ENCODE measurements at regions of chr1 and their contacts with region 1.

Region 1: GRCh38 chr1:230917284-230918135 is 49.2 kb upstream of the C1orf198 start:
- DNase-seq: peak; percentile 93
- H3K4me3 Mint-ChIP-seq: no peak overlapping the region
- H3K27ac Mint-ChIP-seq: no peak overlapping the region
- H3K4me1 Mint-ChIP-seq: peaks cover 6% of the 10 kb centered on the region
- H3K27me3 Mint-ChIP-seq: no peaks in the 10 kb centered on the region
- CTCF ChIP-seq: peak; percentile 96

Region 2: GRCh38 chr1:230632273-230632873 is 285.1 kb before region 1 on chr1:
- CTCF ChIA-PET with region 1: interaction called, 3 read pairs
- POLR2A ChIA-PET with region 1: no interaction called
- intact Hi-C with region 1: loop called (anchors 1 kb)
- DNase-seq: peak; percentile 88
- H3K4me3 Mint-ChIP-seq: no peak overlapping the region
- H3K27ac Mint-ChIP-seq: no peak overlapping the region
- H3K4me1 Mint-ChIP-seq: peaks cover 4% of the 10 kb centered on the region
- H3K27me3 Mint-ChIP-seq: peaks cover 17% of the 10 kb centered on the region
- CTCF ChIP-seq: peak; percentile 84

Region 3: GRCh38 chr1:230797942-230798418 is 119.5 kb before region 1 on chr1:
- CTCF ChIA-PET with region 1: interaction called, 70 read pairs
- POLR2A ChIA-PET with region 1: no interaction called
- intact Hi-C with region 1: loop called (anchors 1 kb)
- DNase-seq: peak; percentile 83
- H3K4me3 Mint-ChIP-seq: no peak overlapping the region
- H3K27ac Mint-ChIP-seq: no peak overlapping the region
- H3K4me1 Mint-ChIP-seq: no peaks in the 10 kb centered on the region
- H3K27me3 Mint-ChIP-seq: peaks cover 34% of the 10 kb centered on the region
- CTCF ChIP-seq: peak; percentile 70

Region 4: GRCh38 chr1:230906226-230906625 is 11.3 kb before region 1 on chr1:
- CTCF ChIA-PET with region 1: interaction called, 15 read pairs
- POLR2A ChIA-PET with region 1: interaction called, 5 read pairs
- intact Hi-C with region 1: no loop called
- DNase-seq: no peak
- H3K4me3 Mint-ChIP-seq: no peak overlapping the region
- H3K27ac Mint-ChIP-seq: no peak overlapping the region
- H3K4me1 Mint-ChIP-seq: no peaks in the 10 kb centered on the region
- H3K27me3 Mint-ChIP-seq: no peaks in the 10 kb centered on the region
- CTCF ChIP-seq: no peak

Region 5: GRCh38 chr1:230978491-230979388 is 61.2 kb after region 1 on chr1 and contains the starts of genes ARV1 and TTC13:
- CTCF ChIA-PET with region 1: interaction called, 7 read pairs
- POLR2A ChIA-PET with region 1: interaction called, 3 read pairs
- intact Hi-C with region 1: loop called (anchors 5 kb)
- DNase-seq: peak; percentile 100
- H3K4me3 Mint-ChIP-seq: no peak within 1 kb of the TSS
- H3K27ac Mint-ChIP-seq: peak within 1 kb of the TSS; percentile 83
- H3K4me1 Mint-ChIP-seq: peaks cover 7% of the 10 kb centered on the region
- H3K27me3 Mint-ChIP-seq: no peaks in the 10 kb centered on the region
- CTCF ChIP-seq: peak; percentile 15
- total RNA-seq, gene ARV1: 41.8 and 51.8 TPM in 2 replicates
- total RNA-seq, gene TTC13: 29.9 and 35.2 TPM in 2 replicates

Region 6: DNA sequence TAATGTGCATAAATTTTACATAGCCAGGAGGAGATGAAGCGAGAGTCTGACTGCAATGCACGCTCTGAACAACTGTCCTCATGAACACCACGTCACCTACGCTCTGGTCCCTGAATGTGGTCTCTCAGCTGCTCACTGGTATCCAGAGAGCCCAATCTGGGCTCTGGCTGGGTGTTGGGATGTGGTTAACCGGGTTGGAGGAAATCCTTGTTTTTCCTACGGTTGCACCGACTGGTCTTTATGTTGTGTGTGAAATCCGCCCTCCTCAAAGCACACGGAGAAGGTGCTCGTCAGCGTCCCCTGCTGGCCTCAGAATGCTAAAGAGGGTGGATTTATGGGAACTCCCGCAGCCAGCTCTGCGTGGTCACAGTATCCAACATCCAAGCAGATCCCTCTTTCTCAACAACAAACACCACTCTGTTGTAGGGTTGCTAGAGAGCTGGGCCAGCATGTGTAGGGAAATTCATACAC is 174.4 kb after region 1 on chr1:
- CTCF ChIA-PET with region 1: no interaction called
- POLR2A ChIA-PET with region 1: no interaction called
- intact Hi-C with region 1: loop called (anchors 1 kb)
- DNase-seq: peak; percentile 79
- H3K4me3 Mint-ChIP-seq: no peak overlapping the region
- H3K27ac Mint-ChIP-seq: no peak overlapping the region
- H3K4me1 Mint-ChIP-seq: peaks cover 4% of the 10 kb centered on the region
- H3K27me3 Mint-ChIP-seq: peaks cover 76% of the 10 kb centered on the region
- CTCF ChIP-seq: peak; percentile 87